H1 (cell line): ENCODE measurements at regions of chr22 and their contacts with region 1.

Region 1: DNA sequence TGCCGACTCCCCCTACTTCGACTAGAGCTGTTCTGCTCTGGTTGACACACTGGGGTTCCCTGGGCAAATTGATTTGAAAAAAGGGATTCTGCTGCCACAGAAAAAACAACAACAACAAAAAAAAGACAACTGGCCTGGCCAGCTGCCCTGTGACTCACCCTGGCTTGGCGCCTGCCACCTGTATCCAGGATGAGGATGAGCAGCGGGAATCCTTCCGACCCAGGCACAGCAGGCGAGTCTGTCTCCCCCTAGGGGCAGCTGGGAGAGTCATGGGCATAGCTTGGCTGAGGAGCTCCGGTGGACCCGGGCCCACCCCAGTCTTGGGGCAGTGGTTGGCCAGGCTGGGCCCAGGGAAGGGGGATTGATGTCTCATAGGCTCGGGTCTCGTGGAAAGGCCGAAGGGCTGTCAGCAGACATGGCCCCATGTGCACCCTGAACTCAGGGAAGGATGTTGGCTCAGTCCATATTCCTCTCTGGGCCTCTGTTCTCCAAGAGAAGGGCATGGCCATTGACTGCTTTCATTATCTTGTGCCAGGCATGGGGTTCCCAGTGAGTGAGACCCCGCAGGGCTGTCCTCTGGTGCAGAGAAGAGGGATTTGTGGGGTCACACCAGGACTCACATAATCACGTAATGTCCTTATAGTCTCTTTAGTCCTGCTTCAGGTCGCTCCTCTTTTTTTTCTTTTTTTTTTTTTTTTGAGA is 10.4 kb upstream of the SUN2 start:
- DNase-seq: peak; percentile 68 to 89
- H3K4me3 ChIP-seq: no peak overlapping the region
- H3K27ac ChIP-seq: no peak overlapping the region
- H3K4me1 ChIP-seq: peaks cover 0 to 6% (median 1%) of the 10 kb centered on the region in 4 experiments; a peak in 4 of 7 replicates
- H3K27me3 ChIP-seq: no peaks in the 10 kb centered on the region; a peak in 1 of 7 replicates
- CTCF ChIP-seq: peak; percentile 83 to 97 (median 94)
- EP300 ChIP-seq: no peak
- POLR2A ChIP-seq: no peak
- RAD21 ChIP-seq: peak; percentile 54 to 68

Region 2: GRCh38 chr22:38745676-38746460 is 20.4 kb before region 1 on chr22:
- CTCF ChIA-PET with region 1: interaction called, 28 read pairs
- POLR2A ChIA-PET with region 1: interaction called, 7 read pairs
- DNase-seq: no peak
- H3K4me3 ChIP-seq: no peak overlapping the region
- H3K27ac ChIP-seq: no peak overlapping the region
- H3K4me1 ChIP-seq: no peaks in the 10 kb centered on the region; a peak in 1 of 7 replicates
- H3K27me3 ChIP-seq: peaks cover 0 to 2% (median 0%) of the 10 kb centered on the region in 4 experiments; a peak in 1 of 7 replicates
- CTCF ChIP-seq: no peak
- EP300 ChIP-seq: no peak
- POLR2A ChIP-seq: no peak
- RAD21 ChIP-seq: no peak

Region 3: GRCh38 chr22:38792833-38793232 is 26.6 kb after region 1 on chr22:
- CTCF ChIA-PET with region 1: interaction called, 33 read pairs
- POLR2A ChIA-PET with region 1: no interaction called
- DNase-seq: no peak
- H3K4me3 ChIP-seq: peak overlapping the region in 2 of 4 experiments; percentile 61 to 86; a peak in 3 of 8 replicates
- H3K27ac ChIP-seq: no peak overlapping the region
- H3K4me1 ChIP-seq: peaks cover 0 to 4% (median 0%) of the 10 kb centered on the region in 4 experiments; a peak in 1 of 7 replicates
- H3K27me3 ChIP-seq: peaks cover 0 to 6% (median 0%) of the 10 kb centered on the region in 4 experiments; a peak in 2 of 7 replicates
- CTCF ChIP-seq: no peak
- EP300 ChIP-seq: no peak
- POLR2A ChIP-seq: no peak
- RAD21 ChIP-seq: no peak

Region 4: GRCh38 chr22:38832005-38832978 is 66.1 kb after region 1 on chr22:
- CTCF ChIA-PET with region 1: interaction called, 15 read pairs
- POLR2A ChIA-PET with region 1: interaction called, 3 read pairs
- DNase-seq: no peak
- H3K4me3 ChIP-seq: no peak overlapping the region
- H3K27ac ChIP-seq: no peak overlapping the region
- H3K4me1 ChIP-seq: peaks cover 0 to 11% (median 5%) of the 10 kb centered on the region in 4 experiments; a peak in 5 of 7 replicates
- H3K27me3 ChIP-seq: no peaks in the 10 kb centered on the region
- CTCF ChIP-seq: no peak
- EP300 ChIP-seq: no peak
- POLR2A ChIP-seq: no peak
- RAD21 ChIP-seq: no peak

Region 5: GRCh38 chr22:38862375-38863329 is 96.4 kb after region 1 on chr22:
- CTCF ChIA-PET with region 1: interaction called, 79 read pairs
- POLR2A ChIA-PET with region 1: interaction called, 7 read pairs
- DNase-seq: no peak
- H3K4me3 ChIP-seq: no peak overlapping the region
- H3K27ac ChIP-seq: no peak overlapping the region
- H3K4me1 ChIP-seq: peaks cover 0 to 34% (median 23%) of the 10 kb centered on the region in 4 experiments; a peak in 6 of 7 replicates
- H3K27me3 ChIP-seq: peaks cover 0 to 3% (median 0%) of the 10 kb centered on the region in 4 experiments; a peak in 1 of 7 replicates
- CTCF ChIP-seq: no peak
- EP300 ChIP-seq: no peak
- POLR2A ChIP-seq: no peak
- RAD21 ChIP-seq: no peak